Endothelial cell of umbilical vein (primary cell): ENCODE measurements at regions of chr18 and their contacts with region 1.

Region 1: DNA sequence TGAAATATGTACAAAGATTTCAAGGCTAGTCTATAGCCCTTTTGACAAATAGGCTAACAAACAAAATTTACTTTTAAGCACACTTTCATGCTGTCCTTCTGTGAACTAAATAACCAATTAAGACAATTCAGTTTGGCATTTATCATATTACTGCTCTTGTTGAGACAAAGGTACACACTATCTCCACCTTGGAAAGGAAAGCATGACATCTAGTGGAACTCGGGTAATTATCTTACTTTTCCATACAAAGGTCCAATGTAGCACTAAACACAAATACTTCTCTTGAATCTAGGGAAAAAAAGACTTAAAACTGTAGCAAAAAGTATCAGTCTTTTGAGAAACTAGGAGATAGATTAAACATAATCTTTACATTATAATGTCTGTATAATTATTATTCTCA is 125.0 kb upstream of the CD226 start:
- DNase-seq: peak; percentile 60
- H3K4me3 ChIP-seq: no peak overlapping the region
- H3K27ac ChIP-seq: no peak overlapping the region
- H3K4me1 ChIP-seq: no peaks in the 10 kb centered on the region
- H3K27me3 ChIP-seq: no peaks in the 10 kb centered on the region
- CTCF ChIP-seq: no peak
- POLR2A ChIP-seq: no peak

Region 2: DNA sequence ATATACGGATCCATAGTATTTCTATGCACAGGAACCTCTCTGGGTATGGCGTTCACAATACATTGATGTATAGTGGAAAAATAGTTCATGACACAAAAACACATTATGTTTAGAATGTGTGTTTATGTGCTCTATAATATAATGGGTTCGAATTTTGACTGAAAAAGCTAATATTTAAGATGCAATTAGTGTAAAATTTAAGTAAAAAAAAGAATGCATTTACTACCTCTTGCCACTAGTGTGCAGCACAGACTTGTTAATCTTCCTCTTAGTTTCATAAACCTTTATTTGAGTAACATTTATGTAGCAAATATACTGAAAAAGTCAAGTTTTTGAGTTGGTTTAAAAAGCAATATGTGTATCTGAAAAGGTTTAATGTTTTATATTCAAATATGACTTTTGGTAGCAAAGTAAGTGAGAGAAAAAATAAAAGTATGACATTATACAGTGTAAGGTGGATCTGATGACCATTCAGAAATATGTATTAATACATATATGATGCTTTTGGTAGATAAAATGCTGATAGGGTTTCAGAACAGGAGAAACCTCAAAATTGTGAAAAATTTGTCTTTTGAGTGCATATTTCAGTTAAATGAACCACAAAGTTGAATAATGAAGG is 1225.3 kb before region 1 on chr18:
- CTCF ChIA-PET with region 1: no interaction called
- POLR2A ChIA-PET with region 1: no interaction called
- dilution Hi-C with region 1: no loop called
- intact Hi-C with region 1: loop called (anchors 5 kb)
- DNase-seq: peak; percentile 64
- H3K4me3 ChIP-seq: no peak overlapping the region
- H3K27ac ChIP-seq: no peak overlapping the region
- H3K4me1 ChIP-seq: no peaks in the 10 kb centered on the region
- H3K27me3 ChIP-seq: no peaks in the 10 kb centered on the region
- CTCF ChIP-seq: peak; percentile 33 to 45
- POLR2A ChIP-seq: no peak

Region 3: DNA sequence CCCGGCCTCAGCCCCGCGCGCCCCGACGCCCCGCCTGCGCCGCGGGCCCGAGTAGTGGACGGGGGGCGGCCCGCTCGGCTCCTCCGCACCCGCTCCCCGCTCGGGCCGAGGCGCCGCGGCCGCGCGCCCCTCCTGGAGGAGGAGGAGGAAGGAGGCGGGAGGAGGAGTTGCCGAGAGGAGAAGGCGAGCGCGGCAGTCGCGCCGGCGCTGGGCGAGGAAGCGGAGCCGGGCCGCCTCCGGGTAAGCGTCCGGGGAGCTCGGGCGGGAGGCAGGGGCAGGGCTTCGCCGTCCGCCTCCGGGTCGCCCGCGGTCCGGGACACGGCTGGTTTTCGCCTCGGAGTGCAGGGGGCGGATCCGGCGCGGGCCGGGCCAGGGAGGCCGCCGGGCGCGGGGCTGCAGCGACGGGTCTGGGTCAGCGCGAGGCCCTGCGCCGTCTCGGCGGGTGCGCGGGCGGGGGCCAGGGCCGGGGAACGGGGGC is 216.2 kb after region 1 on chr18 and contains the start of gene SOCS6:
- CTCF ChIA-PET with region 1: no interaction called
- POLR2A ChIA-PET with region 1: no interaction called
- dilution Hi-C with region 1: no loop called
- intact Hi-C with region 1: no loop called
- DNase-seq: peak; percentile 60
- H3K4me3 ChIP-seq: peak within 1 kb of the TSS; percentile 79 to 98 (median 90)
- H3K27ac ChIP-seq: peak within 1 kb of the TSS; percentile 73
- H3K4me1 ChIP-seq: peaks cover 22% of the 10 kb centered on the region
- H3K27me3 ChIP-seq: no peaks in the 10 kb centered on the region
- CTCF ChIP-seq: no peak
- POLR2A ChIP-seq: peak; percentile 75
- total RNA-seq, gene SOCS6: 13.2 and 15.0 TPM in 2 replicates